ENCODE measurements at regions of chr5 and their contacts with region 1.

Region 1: GRCh38 chr5:140664359-140665119 is at the start of gene WDR55:
- DNase-seq: peak; percentile 97
- H3K4me3 ChIP-seq: peak within 1 kb of the TSS; percentile 69 to 86 (median 78)
- H3K27ac ChIP-seq: peak within 1 kb of the TSS; percentile 84 to 94 (median 92)
- H3K4me1 ChIP-seq: peaks cover 24 to 32% (median 29%) of the 10 kb centered on the region in 4 donors
- H3K27me3 ChIP-seq: no peaks in the 10 kb centered on the region
- CTCF ChIP-seq: no peak
- EP300 ChIP-seq: no peak
- POLR2A ChIP-seq: peak; percentile 48
- total RNA-seq, gene WDR55: 17.7 to 23.8 (median 20.6) TPM

Region 2: GRCh38 chr5:140145818-140146522 is 518.6 kb before region 1 on chr5:
- intact Hi-C with region 1: no loop called
- DNase-seq: no peak
- H3K4me3 ChIP-seq: peak overlapping the region; percentile 48 to 58 (median 56)
- H3K27ac ChIP-seq: peak overlapping the region; percentile 13 to 53 (median 28)
- H3K4me1 ChIP-seq: peaks cover 16 to 53% (median 27%) of the 10 kb centered on the region in 4 donors
- H3K27me3 ChIP-seq: no peaks in the 10 kb centered on the region
- CTCF ChIP-seq: peak; percentile 75 to 93 (median 78)
- EP300 ChIP-seq: no peak
- POLR2A ChIP-seq: no peak

Region 3: GRCh38 chr5:140622301-140622700 is 42.2 kb before region 1 on chr5:
- intact Hi-C with region 1: no loop called
- DNase-seq: no peak
- H3K4me3 ChIP-seq: no peak overlapping the region
- H3K27ac ChIP-seq: no peak overlapping the region
- H3K4me1 ChIP-seq: no peaks in the 10 kb centered on the region
- H3K27me3 ChIP-seq: no peaks in the 10 kb centered on the region
- CTCF ChIP-seq: no peak
- EP300 ChIP-seq: no peak
- POLR2A ChIP-seq: no peak

Region 4: DNA sequence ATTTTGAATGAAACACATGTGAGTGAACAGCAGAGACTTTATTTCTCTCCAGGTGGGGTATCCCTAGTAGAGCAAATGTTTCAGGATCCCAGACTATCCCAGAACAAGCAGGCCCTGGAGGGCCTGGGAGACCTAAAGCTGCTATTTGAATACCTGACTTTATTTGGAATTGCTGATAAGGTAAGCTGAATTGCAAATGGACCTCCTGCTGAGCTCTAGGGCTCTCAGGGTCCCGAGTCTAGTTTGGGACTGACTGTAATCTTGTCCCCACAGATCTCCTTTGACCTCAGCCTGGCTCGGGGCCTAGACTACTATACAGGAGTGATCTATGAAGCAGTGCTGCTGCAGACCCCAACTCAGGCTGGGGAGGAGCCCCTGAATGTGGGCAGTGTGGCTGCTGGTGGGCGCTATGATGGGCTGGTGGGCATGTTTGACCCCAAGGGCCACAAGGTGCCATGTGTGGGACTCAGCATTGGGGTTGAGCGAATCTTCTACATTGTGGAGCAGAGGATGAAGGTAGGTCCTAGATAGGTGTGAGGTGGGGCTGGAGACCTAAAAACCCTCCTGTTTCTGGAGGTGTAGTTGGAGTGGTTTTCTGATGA is 32.5 kb after region 1 on chr5:
- intact Hi-C with region 1: loop called (anchors 5 kb)
- DNase-seq: no peak
- H3K4me3 ChIP-seq: no peak overlapping the region
- H3K27ac ChIP-seq: no peak overlapping the region
- H3K4me1 ChIP-seq: peaks cover 23 to 48% (median 39%) of the 10 kb centered on the region in 4 donors
- H3K27me3 ChIP-seq: no peaks in the 10 kb centered on the region
- CTCF ChIP-seq: no peak
- EP300 ChIP-seq: no peak
- POLR2A ChIP-seq: no peak

Measured in esophagus muscularis mucosa (tissue), 4 donors.